Ascending aorta (tissue), 2 donors: ENCODE measurements at regions of chr12 and their contacts with region 1.

Region 1: GRCh38 chr12:21773263-21773741 is 1.2 kb downstream of the KCNJ8 start:
- DNase-seq: peak in 1 of 2 donors; percentile 62
- H3K4me3 ChIP-seq: peak overlapping the region; percentile 49 to 79
- H3K27ac ChIP-seq: peak overlapping the region; percentile 54 to 80
- H3K4me1 ChIP-seq: no peaks in the 10 kb centered on the region
- H3K27me3 ChIP-seq: no peaks in the 10 kb centered on the region
- CTCF ChIP-seq: peak in 1 of 3 experiments; percentile 26

Region 2: DNA sequence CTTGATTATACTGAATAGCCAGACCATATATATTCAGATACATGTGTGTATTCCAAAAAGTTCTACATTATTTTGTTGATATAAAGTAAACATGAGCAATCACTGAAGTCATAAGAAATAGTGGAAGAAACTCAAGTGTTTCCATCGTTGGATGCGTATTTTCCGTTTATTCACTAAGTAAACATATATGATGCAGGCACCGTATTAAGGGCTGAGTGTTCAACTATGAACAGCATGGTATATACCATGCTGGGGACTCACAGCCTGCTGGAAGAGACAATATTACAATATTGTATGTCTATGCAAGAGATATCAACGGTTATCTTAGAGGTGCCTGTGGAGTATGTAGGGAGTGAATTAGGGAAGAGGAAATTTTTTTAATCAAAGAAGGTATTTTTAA is 334.7 kb before region 1 on chr12:
- intact Hi-C with region 1: loop called (anchors 10 kb)
- DNase-seq: no peak
- H3K4me3 ChIP-seq: peak overlapping the region; percentile 73 to 80
- H3K27ac ChIP-seq: peak overlapping the region; percentile 84 to 88
- H3K4me1 ChIP-seq: no peaks in the 10 kb centered on the region
- H3K27me3 ChIP-seq: no peaks in the 10 kb centered on the region
- CTCF ChIP-seq: no peak

Region 3: GRCh38 chr12:21501379-21501956 is 271.8 kb before region 1 on chr12 and contains the starts of genes GOLT1B and RECQL:
- intact Hi-C with region 1: loop called (anchors 5 kb)
- DNase-seq: peak; percentile 87 to 98
- H3K4me3 ChIP-seq: peak within 1 kb of the TSS; percentile 95 to 99
- H3K27ac ChIP-seq: peak within 1 kb of the TSS; percentile 95 to 97
- H3K4me1 ChIP-seq: peaks cover 0 to 25% of the 10 kb centered on the region in 2 donors
- H3K27me3 ChIP-seq: no peaks in the 10 kb centered on the region
- CTCF ChIP-seq: no peak
- total RNA-seq, gene GOLT1B: 9.2 TPM
- total RNA-seq, gene RECQL: 8.7 TPM

Region 4: DNA sequence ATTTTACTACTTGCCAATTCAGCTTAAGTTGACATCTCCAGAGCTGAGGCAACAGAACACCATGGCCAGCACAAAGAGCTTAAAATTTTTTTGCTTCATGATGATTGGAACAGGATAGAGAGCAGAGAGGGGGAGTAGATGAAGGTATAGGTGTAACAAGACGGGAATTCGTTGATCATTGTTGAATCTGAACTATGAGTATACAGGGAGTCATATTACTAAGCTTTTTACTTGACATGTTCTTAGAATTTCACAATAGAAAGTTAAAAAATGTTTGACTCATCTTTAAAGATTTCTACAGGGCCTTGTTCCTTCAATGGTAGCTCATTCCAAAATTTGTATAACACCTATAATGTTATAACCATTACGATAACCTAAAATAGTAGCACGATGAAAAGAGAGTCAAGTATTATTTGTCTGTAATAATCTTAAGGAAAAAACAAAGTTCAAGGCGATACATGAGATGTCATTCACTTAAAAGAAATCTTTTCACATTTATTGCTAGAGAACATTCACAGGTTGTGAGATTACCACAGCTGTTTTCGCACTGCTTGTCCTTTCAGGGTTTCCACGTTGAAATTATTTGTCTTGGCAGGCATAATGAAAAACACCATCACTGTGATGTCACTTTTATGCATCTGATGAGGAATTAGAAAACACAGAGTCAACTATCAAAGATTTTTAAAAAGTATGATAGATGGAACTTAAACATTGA is 213.3 kb before region 1 on chr12:
- intact Hi-C with region 1: no loop called
- DNase-seq: no peak
- H3K4me3 ChIP-seq: no peak overlapping the region
- H3K27ac ChIP-seq: no peak overlapping the region
- H3K4me1 ChIP-seq: no peaks in the 10 kb centered on the region
- H3K27me3 ChIP-seq: no peaks in the 10 kb centered on the region
- CTCF ChIP-seq: no peak

Region 5: GRCh38 chr12:21818627-21819026 is 45.3 kb after region 1 on chr12:
- intact Hi-C with region 1: loop called (anchors 5 kb)
- DNase-seq: no peak
- H3K4me3 ChIP-seq: no peak overlapping the region
- H3K27ac ChIP-seq: no peak overlapping the region
- H3K4me1 ChIP-seq: peaks cover 3 to 6% of the 10 kb centered on the region in 2 donors
- H3K27me3 ChIP-seq: no peaks in the 10 kb centered on the region
- CTCF ChIP-seq: no peak

Region 6: GRCh38 chr12:21828779-21829178 is 55.5 kb after region 1 on chr12:
- intact Hi-C with region 1: loop called (anchors 5 kb)
- DNase-seq: no peak
- H3K4me3 ChIP-seq: peak overlapping the region in 1 of 2 donors; percentile 42
- H3K27ac ChIP-seq: peak overlapping the region; percentile 20 to 38
- H3K4me1 ChIP-seq: peaks cover 0 to 4% of the 10 kb centered on the region in 2 donors
- H3K27me3 ChIP-seq: no peaks in the 10 kb centered on the region
- CTCF ChIP-seq: no peak

Region 7: GRCh38 chr12:21940549-21941505 is 167.5 kb after region 1 on chr12 and contains the start of gene ABCC9:
- intact Hi-C with region 1: loop called (anchors 1 kb)
- DNase-seq: peak; percentile 12 to 69
- H3K4me3 ChIP-seq: peak within 1 kb of the TSS; percentile 58 to 61
- H3K27ac ChIP-seq: peak within 1 kb of the TSS; percentile 67 to 79
- H3K4me1 ChIP-seq: no peaks in the 10 kb centered on the region
- H3K27me3 ChIP-seq: no peaks in the 10 kb centered on the region
- CTCF ChIP-seq: peak in 1 of 3 experiments; percentile 7
- total RNA-seq, gene ABCC9: 19.8 TPM

Region 8: DNA sequence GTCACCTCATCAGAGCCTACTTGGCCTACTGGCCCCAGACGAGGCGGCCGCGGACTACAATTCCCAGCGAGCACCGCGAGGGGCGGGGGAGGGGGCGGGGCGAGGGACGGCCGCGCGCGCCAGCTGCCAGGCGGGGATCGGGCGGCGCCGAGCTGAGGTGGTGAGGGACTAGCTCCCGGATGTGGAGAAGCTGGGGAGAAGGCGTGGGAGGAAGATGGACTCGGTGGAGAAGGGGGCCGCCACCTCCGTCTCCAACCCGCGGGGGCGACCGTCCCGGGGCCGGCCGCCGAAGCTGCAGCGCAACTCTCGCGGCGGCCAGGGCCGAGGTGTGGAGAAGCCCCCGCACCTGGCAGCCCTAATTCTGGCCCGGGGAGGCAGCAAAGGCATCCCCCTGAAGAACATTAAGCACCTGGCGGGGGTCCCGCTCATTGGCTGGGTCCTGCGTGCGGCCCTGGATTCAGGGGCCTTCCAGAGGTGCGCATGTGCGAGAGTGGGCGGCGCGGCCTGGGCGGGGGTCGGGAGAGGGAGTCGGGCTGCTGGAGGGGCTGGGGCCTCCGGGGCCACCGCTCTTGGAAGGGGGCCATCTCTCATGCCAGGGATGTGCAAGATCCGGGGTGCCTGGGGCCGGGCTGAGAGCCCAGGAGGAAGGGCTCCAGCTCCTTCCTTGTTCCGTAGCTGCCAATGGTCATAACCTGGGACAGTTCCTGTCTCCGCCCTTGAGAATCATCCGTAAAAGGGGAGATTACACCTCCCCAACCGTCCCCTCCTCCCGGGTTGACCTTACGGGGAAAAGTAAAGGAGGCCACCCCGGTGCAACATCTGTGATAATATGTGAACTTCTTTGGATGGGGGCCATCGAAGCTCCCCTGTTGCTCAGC is 273.0 kb after region 1 on chr12 and contains the start of gene CMAS:
- intact Hi-C with region 1: loop called (anchors 5 kb)
- DNase-seq: peak; percentile 16 to 88
- H3K4me3 ChIP-seq: peak within 1 kb of the TSS; percentile 92 to 95
- H3K27ac ChIP-seq: peak within 1 kb of the TSS; percentile 86 to 88
- H3K4me1 ChIP-seq: peaks cover 0 to 4% of the 10 kb centered on the region in 2 donors
- H3K27me3 ChIP-seq: no peaks in the 10 kb centered on the region
- CTCF ChIP-seq: no peak
- total RNA-seq, gene CMAS: 13.7 TPM